ENCODE measurements at regions of chr5 and their contacts with region 1.

Region 1: GRCh38 chr5:148998174-148998797 is 64.6 kb downstream of the SH3TC2 start:
- DNase-seq: peak; percentile 74
- H3K4me3 ChIP-seq: no peak overlapping the region
- H3K27ac ChIP-seq: no peak overlapping the region
- H3K4me1 ChIP-seq: peaks cover 31% of the 10 kb centered on the region
- H3K27me3 ChIP-seq: no peaks in the 10 kb centered on the region
- CTCF ChIP-seq: peak; percentile 65 to 67

Region 2: DNA sequence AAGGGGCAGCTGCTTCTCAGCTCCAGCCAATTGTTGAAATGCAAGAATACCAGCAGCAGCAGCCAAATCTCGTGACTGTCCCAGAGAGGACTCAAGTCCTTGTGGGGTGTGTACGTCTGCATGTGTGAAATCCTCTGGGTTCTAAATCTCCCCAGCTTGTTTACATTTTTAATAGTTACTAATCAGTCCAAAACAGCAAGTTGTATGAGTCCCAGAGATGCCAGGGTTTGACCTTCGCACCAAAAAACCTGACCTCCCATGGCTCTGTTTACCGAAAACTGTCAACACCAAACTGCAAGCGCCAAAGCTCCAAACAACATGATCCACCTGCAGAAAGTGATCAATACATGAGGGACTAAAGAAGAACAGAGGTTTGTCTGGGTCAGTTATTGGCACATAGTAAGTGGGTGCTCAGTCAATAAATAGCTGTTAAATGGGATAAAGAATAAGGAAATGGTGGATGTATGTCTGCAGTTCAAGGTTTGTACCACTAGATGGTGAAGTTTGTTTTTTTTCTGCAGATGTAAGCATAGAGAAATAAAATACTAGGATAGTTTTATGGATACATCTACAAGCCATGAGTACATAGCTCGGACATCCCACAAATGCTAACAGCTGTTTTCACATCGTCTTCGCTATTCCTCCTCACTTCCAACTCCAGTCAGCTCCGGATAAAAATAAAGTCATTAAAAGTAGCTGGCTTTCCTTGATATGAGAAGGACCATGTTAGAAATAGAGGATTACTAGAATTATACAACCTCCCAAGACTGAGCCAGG is 257.1 kb before region 1 on chr5:
- CTCF ChIA-PET with region 1: interaction called, 5 read pairs
- dilution Hi-C with region 1: no loop called
- in situ Hi-C with region 1: loop called (anchors 10 kb)
- intact Hi-C with region 1: loop called (anchors 1 kb)
- DNase-seq: peak; percentile 58
- H3K4me3 ChIP-seq: no peak overlapping the region
- H3K27ac ChIP-seq: no peak overlapping the region
- H3K4me1 ChIP-seq: no peaks in the 10 kb centered on the region
- H3K27me3 ChIP-seq: no peaks in the 10 kb centered on the region
- CTCF ChIP-seq: peak; percentile 66 to 77

Region 3: GRCh38 chr5:148820461-148821395 is 177.6 kb before region 1 on chr5:
- CTCF ChIA-PET with region 1: no interaction called
- dilution Hi-C with region 1: no loop called
- in situ Hi-C with region 1: loop called (anchors 5 to 10 kb)
- intact Hi-C with region 1: loop called (anchors 1 kb)
- DNase-seq: peak; percentile 37
- H3K4me3 ChIP-seq: no peak overlapping the region
- H3K27ac ChIP-seq: no peak overlapping the region
- H3K4me1 ChIP-seq: peaks cover 11% of the 10 kb centered on the region
- H3K27me3 ChIP-seq: no peaks in the 10 kb centered on the region
- CTCF ChIP-seq: peak; percentile 71 to 75

Region 4: DNA sequence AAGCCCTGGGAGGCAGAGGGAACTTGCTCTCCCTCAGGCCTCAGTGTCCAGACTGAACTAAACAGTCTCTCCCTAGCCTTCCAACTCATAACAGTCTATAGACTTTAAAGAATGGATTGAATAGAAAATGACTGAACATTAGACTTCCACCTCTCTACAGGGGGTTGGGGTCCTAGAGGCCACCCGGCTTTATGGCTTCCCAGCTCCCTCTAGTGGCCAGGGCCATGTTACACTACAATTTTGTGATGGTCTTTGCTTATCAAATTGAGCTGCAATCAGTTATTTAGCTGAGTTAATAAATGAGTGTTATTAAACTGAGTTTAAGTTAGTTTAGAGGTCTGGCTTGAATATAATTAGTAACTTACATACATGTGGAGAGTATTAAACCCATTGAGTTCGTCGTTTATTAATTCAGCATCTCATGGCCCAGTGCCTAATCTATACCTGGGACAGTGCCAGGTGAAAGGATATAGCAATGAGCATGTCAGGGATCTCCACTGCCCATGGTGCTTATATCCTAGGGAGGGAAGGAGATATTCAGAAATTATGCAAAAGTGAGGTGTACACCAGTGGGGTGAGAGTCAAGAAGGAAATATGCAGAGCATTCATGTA is 40.6 kb before region 1 on chr5:
- CTCF ChIA-PET with region 1: no interaction called
- dilution Hi-C with region 1: no loop called
- in situ Hi-C with region 1: no loop called
- intact Hi-C with region 1: loop called (anchors 1 kb)
- DNase-seq: peak; percentile 33
- H3K4me3 ChIP-seq: no peak overlapping the region
- H3K27ac ChIP-seq: peak overlapping the region; percentile 73
- H3K4me1 ChIP-seq: peaks cover 18% of the 10 kb centered on the region
- H3K27me3 ChIP-seq: no peaks in the 10 kb centered on the region
- CTCF ChIP-seq: peak; percentile 90